CD8-positive, alpha-beta memory T cell (primary cell): ENCODE measurements at regions of chr10 and their contacts with region 1.

Region 1: GRCh38 chr10:73940634-73941221 is 29.8 kb downstream of the PLAU start:
- DNase-seq: peak; percentile 73 to 86 (median 79)
- H3K4me3 ChIP-seq: peak overlapping the region; percentile 44
- H3K4me3 Mint-ChIP-seq: peak overlapping the region; percentile 6 to 77 (median 63)
- H3K27ac ChIP-seq: peak overlapping the region; percentile 19
- H3K27ac Mint-ChIP-seq: peak overlapping the region in 4 of 8 donors; percentile 15 to 86 (median 72)
- H3K4me1 ChIP-seq: peaks cover 8% of the 10 kb centered on the region
- H3K4me1 Mint-ChIP-seq: peaks cover 6 to 8% (median 7%) of the 10 kb centered on the region in 3 donors
- H3K27me3 ChIP-seq: no peaks in the 10 kb centered on the region
- H3K27me3 Mint-ChIP-seq: peaks cover 0 to 5% of the 10 kb centered on the region in 2 donors

Region 2: DNA sequence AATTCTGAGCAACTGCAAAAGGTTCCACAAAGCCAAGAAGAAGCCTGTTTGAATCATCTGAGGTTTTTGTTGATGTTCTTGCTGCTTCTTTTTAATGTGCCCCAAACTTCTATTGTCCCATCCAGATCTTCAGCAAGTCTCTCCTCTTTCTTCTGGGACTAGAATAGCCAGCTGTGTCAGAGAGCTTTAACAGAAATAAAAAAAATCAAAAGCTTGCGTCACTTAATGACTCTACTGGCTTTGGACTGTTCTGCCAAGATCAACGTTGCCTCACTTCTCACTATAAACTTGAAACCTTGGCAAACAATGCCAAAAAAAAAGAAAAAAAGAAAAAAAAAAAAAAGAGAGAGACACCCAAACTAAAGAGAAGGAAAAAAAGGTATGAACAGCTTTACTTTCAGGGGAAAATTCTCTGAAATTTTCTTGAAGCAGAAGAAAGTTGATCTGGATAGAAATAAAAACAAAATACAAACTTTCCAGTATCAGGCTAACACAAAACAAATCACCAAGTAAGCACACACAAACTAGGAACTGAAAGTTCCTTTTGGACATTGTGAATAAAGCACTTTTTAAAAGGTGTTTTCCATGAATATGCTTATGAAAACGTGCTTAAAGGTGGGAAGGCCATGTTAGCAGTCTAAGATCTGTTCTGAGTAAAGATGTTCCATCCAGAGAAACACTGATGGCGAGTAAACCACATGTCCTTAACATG is 364.4 kb before region 1 on chr10:
- CTCF ChIA-PET with region 1: no interaction called
- POLR2A ChIA-PET with region 1: no interaction called
- DNase-seq: no peak
- H3K4me3 ChIP-seq: no peak overlapping the region
- H3K4me3 Mint-ChIP-seq: no peak overlapping the region
- H3K27ac ChIP-seq: no peak overlapping the region
- H3K27ac Mint-ChIP-seq: peak overlapping the region in 1 of 8 donors; percentile 30
- H3K4me1 ChIP-seq: no peaks in the 10 kb centered on the region
- H3K4me1 Mint-ChIP-seq: no peaks in the 10 kb centered on the region
- H3K27me3 ChIP-seq: no peaks in the 10 kb centered on the region
- H3K27me3 Mint-ChIP-seq: no peaks in the 10 kb centered on the region

Region 3: GRCh38 chr10:73810735-73811465 is 129.8 kb before region 1 on chr10:
- CTCF ChIA-PET with region 1: no interaction called
- POLR2A ChIA-PET with region 1: no interaction called
- DNase-seq: peak; percentile 51 to 82 (median 70)
- H3K4me3 ChIP-seq: peak overlapping the region; percentile 64
- H3K4me3 Mint-ChIP-seq: peak overlapping the region; percentile 86 to 96 (median 91)
- H3K27ac ChIP-seq: peak overlapping the region; percentile 92
- H3K27ac Mint-ChIP-seq: peak overlapping the region; percentile 85 to 97 (median 94)
- H3K4me1 ChIP-seq: peaks cover 40% of the 10 kb centered on the region
- H3K4me1 Mint-ChIP-seq: peaks cover 39 to 52% (median 43%) of the 10 kb centered on the region in 3 donors
- H3K27me3 ChIP-seq: no peaks in the 10 kb centered on the region
- H3K27me3 Mint-ChIP-seq: no peaks in the 10 kb centered on the region

Region 4: DNA sequence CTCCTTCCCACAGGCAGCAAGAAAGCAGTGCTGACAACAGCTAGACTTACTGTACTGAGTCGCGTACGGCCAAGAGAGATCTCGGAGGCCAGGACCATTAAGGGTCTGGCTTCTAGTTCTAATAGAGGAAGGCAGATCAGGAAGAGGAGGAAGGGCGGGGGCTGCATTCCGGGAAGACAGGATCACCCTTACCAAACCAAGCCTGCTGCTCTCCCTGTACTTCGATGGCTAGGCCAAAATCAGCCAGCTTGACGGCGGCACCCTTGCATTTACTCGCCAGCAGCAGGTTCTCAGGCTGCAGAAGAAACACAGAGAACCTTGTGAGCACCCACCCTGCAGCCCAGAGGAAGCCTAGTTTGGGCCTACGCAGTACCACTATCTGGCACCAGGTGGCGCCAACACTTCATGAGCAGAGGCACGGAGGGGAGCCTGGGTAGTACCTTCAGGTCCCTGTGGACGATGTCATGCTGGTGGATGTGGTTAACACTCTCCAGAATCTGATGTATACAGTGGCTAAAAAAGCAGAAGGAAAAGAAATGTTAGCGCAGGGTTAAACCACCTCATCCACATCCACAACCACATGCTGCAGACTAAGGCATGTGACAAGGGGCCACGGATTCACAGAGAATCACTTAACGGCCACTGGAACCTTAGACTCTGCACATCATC is 91.8 kb before region 1 on chr10:
- CTCF ChIA-PET with region 1: interaction called, 28 read pairs
- POLR2A ChIA-PET with region 1: no interaction called
- DNase-seq: peak; percentile 84 to 92 (median 88)
- H3K4me3 ChIP-seq: no peak overlapping the region
- H3K4me3 Mint-ChIP-seq: peak overlapping the region in 6 of 7 donors; percentile 22 to 76 (median 64)
- H3K27ac ChIP-seq: no peak overlapping the region
- H3K27ac Mint-ChIP-seq: peak overlapping the region; percentile 71 to 94 (median 92)
- H3K4me1 ChIP-seq: peaks cover 16% of the 10 kb centered on the region
- H3K4me1 Mint-ChIP-seq: peaks cover 17 to 21% (median 21%) of the 10 kb centered on the region in 3 donors
- H3K27me3 ChIP-seq: no peaks in the 10 kb centered on the region
- H3K27me3 Mint-ChIP-seq: no peaks in the 10 kb centered on the region

Region 5: DNA sequence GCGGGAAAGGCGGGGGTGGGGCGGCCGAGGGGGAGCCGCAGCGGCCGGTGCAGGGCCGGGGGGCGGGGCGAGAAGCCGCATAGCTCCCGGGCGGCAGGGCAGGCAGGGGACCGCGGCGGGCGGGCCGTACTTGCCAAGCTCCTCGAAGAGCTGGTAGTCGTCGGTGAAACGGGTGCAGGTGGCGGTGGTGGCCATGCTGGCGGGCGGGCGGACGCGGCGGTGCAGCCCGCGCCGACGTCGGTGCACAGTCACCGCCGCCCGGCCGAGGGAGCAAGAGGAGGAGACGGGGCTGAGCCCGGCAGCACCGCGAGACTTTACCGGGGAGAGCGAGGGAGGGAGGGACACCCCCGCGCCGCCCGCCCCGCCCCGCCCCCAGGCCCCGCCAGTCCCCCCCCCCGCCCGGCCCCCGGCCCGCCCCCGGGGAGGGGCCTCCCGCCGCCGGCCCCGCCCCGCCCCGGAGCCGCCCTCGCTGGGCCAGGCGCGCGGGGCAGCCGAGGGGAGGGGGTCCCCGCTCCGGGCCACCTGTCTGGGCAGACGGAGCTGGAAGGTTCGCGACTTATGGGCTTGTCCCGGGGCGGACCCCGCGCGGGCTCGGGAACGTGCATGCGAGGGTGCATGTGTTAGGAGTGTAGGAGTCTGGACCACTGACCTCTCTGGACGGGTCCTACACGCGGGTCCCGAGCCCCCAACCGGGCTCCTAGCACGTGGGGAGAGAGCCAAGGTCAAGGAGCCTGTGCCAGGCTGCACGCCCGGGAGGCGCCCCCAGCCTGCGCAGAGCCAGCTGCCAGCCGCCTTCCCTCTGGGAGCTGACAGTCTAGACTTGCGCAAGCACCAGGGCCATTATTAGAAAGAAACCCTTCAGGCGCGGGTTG is 66.2 kb before region 1 on chr10 and contains the start of gene CAMK2G:
- CTCF ChIA-PET with region 1: interaction called, 81 read pairs
- POLR2A ChIA-PET with region 1: no interaction called
- DNase-seq: peak; percentile 76 to 91 (median 82)
- H3K4me3 ChIP-seq: peak within 1 kb of the TSS; percentile 69
- H3K4me3 Mint-ChIP-seq: peak within 1 kb of the TSS; percentile 85 to 98 (median 89)
- H3K27ac ChIP-seq: peak within 1 kb of the TSS; percentile 78
- H3K27ac Mint-ChIP-seq: peak within 1 kb of the TSS; percentile 86 to 97 (median 92)
- H3K4me1 ChIP-seq: peaks cover 57% of the 10 kb centered on the region
- H3K4me1 Mint-ChIP-seq: peaks cover 50 to 78% (median 52%) of the 10 kb centered on the region in 3 donors
- H3K27me3 ChIP-seq: no peaks in the 10 kb centered on the region
- H3K27me3 Mint-ChIP-seq: no peaks in the 10 kb centered on the region
- total RNA-seq, gene CAMK2G: 17.3 to 17.5 TPM

Region 6: DNA sequence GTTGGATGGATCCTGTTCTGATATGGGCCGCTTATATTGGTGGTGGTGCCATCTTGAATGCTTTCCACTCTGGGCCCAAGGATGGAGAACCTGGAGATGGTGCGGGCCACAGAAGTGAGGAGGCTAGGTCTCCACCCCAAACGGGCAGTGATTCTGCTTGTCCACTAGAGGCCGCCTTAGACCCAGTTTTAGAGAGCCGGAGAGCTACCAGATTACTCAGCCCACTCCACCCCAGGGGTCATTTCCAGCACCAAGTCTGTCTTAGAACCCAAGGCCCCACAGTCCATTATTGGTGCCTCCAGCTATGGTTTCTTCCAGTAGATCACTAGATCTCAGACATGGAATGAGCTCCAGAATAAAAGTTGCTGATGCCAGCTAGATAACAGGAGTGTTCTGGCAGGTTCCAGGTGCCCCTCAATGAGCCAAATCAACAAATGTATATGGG is 54.6 kb before region 1 on chr10:
- CTCF ChIA-PET with region 1: interaction called, 260 read pairs
- POLR2A ChIA-PET with region 1: interaction called, 3 read pairs
- DNase-seq: peak; percentile 44 to 77 (median 65)
- H3K4me3 ChIP-seq: no peak overlapping the region
- H3K4me3 Mint-ChIP-seq: no peak overlapping the region
- H3K27ac ChIP-seq: no peak overlapping the region
- H3K27ac Mint-ChIP-seq: peak overlapping the region in 1 of 8 donors; percentile 30
- H3K4me1 ChIP-seq: no peaks in the 10 kb centered on the region
- H3K4me1 Mint-ChIP-seq: peaks cover 0 to 12% (median 5%) of the 10 kb centered on the region in 3 donors
- H3K27me3 ChIP-seq: no peaks in the 10 kb centered on the region
- H3K27me3 Mint-ChIP-seq: peaks cover 0 to 3% of the 10 kb centered on the region in 2 donors

Region 7: DNA sequence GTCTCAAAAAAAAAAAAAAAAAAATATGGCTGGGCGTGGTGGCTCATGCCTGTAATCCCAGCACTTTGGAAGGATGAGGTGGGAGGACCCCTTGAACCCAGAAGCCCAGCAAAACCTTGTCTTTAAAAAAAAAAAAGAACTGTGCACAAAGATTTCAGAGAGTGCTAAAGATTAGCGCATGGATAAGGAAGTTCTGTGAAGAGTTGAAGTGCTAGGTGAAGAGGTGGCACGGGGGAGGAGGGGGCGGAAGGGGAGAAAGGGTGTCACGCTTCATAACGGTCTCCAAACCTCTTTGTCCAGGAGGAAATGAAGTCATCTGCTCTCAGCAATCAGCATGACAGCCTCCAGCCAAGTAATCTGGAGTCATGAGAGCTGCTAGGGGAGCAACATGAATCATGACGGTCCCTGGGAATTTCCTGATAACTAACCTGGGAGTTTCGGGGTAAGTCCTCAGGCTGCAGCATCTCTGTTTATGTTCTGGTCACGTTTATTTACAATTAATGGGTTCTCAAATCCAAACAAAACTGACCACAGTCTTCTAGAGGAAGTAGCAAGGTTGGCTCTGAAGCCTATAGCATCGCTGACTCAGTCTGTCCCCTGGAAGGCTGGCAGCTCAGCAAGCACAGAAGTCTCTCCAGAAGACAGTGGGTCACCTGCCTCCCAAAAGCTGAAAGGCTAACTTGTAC is 31.7 kb before region 1 on chr10:
- CTCF ChIA-PET with region 1: interaction called, 12 read pairs
- POLR2A ChIA-PET with region 1: no interaction called
- DNase-seq: peak in 3 of 5 donors; percentile 27 to 36 (median 32)
- H3K4me3 ChIP-seq: no peak overlapping the region
- H3K4me3 Mint-ChIP-seq: peak overlapping the region; percentile 34 to 84 (median 57)
- H3K27ac ChIP-seq: peak overlapping the region; percentile 19
- H3K27ac Mint-ChIP-seq: peak overlapping the region in 2 of 8 donors; percentile 0 to 22
- H3K4me1 ChIP-seq: peaks cover 34% of the 10 kb centered on the region
- H3K4me1 Mint-ChIP-seq: peaks cover 25 to 35% (median 30%) of the 10 kb centered on the region in 3 donors
- H3K27me3 ChIP-seq: peaks cover 25% of the 10 kb centered on the region
- H3K27me3 Mint-ChIP-seq: peaks cover 44 to 78% of the 10 kb centered on the region in 2 donors

Region 8: DNA sequence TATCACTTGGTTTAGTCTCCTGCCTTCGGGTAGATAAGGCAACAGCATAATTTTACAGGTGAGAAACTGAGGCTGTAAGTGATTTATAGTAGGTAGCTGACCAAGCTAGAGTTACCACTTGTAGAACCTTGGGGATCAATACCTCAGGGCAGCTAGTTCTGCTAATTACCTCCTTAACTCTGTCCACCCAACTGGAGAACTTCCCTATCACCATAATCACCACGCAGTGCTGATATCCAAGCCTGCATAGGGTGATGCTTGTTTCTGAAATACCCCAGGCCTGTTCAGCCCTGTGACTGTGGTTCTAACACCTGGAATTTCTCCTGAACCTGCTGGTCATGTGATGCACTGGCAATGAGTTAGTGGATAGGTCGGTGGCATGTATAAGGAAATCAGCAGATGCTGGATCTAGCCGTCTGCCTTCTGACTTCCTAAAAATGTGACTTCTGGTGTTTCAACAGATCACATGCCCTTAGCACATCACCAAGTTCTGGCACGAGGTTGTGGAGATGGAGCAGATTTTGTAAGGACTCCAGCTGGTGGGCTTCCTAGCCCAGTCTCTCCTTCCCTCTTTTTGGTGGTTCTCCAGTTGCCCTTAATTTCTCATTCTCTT is 14.5 kb before region 1 on chr10:
- CTCF ChIA-PET with region 1: interaction called, 20 read pairs
- POLR2A ChIA-PET with region 1: no interaction called
- DNase-seq: no peak
- H3K4me3 ChIP-seq: no peak overlapping the region
- H3K4me3 Mint-ChIP-seq: no peak overlapping the region
- H3K27ac ChIP-seq: no peak overlapping the region
- H3K27ac Mint-ChIP-seq: no peak overlapping the region
- H3K4me1 ChIP-seq: peaks cover 16% of the 10 kb centered on the region
- H3K4me1 Mint-ChIP-seq: peaks cover 15 to 27% (median 18%) of the 10 kb centered on the region in 3 donors
- H3K27me3 ChIP-seq: no peaks in the 10 kb centered on the region
- H3K27me3 Mint-ChIP-seq: peaks cover 14 to 26% of the 10 kb centered on the region in 2 donors

Region 9: DNA sequence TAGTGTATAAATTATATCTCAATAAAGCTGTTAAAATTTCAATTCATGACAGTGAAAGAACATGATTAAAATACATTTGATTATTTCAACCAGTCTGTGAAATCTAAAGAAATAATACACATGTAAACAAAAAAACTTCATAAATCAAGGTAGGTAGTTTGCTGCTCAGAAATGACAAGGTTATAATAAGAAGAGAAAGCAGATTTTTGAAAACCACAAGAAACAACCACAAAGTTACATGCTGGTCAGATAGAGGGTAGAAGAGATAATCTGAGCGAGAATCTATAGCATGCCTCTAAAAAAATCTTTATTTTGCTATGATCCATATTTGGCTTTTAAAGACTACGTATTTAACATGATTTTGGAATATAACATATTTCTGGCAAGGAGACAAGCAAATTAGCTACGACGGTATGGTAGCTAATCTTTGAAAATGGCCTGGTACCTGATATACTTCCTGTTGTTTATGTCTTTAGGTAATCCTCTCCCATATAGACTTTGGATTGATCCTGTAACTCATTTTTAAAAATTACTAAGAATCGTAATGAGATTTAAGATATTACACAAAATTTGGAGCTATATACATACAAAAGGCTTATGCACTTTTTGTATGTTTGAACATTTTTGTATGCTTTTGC is 33.7 kb after region 1 on chr10:
- CTCF ChIA-PET with region 1: interaction called, 10 read pairs
- POLR2A ChIA-PET with region 1: no interaction called
- DNase-seq: peak in 1 of 5 donors; percentile 23
- H3K4me3 ChIP-seq: peak overlapping the region; percentile 27
- H3K4me3 Mint-ChIP-seq: peak overlapping the region; percentile 6 to 79 (median 63)
- H3K27ac ChIP-seq: no peak overlapping the region
- H3K27ac Mint-ChIP-seq: peak overlapping the region in 6 of 8 donors; percentile 4 to 83 (median 58)
- H3K4me1 ChIP-seq: peaks cover 23% of the 10 kb centered on the region
- H3K4me1 Mint-ChIP-seq: peaks cover 24 to 35% (median 33%) of the 10 kb centered on the region in 3 donors
- H3K27me3 ChIP-seq: no peaks in the 10 kb centered on the region
- H3K27me3 Mint-ChIP-seq: peaks cover 0 to 2% of the 10 kb centered on the region in 2 donors

Region 10: GRCh38 chr10:74189999-74190421 is 249.3 kb after region 1 on chr10:
- CTCF ChIA-PET with region 1: no interaction called
- POLR2A ChIA-PET with region 1: no interaction called
- DNase-seq: peak in 2 of 5 donors; percentile 15 to 38
- H3K4me3 ChIP-seq: peak overlapping the region; percentile 20
- H3K4me3 Mint-ChIP-seq: peak overlapping the region in 6 of 7 donors; percentile 7 to 76 (median 66)
- H3K27ac ChIP-seq: no peak overlapping the region
- H3K27ac Mint-ChIP-seq: peak overlapping the region; percentile 31 to 95 (median 90)
- H3K4me1 ChIP-seq: peaks cover 37% of the 10 kb centered on the region
- H3K4me1 Mint-ChIP-seq: peaks cover 56 to 76% (median 73%) of the 10 kb centered on the region in 3 donors
- H3K27me3 ChIP-seq: no peaks in the 10 kb centered on the region
- H3K27me3 Mint-ChIP-seq: no peaks in the 10 kb centered on the region